B cell (primary cell): ENCODE measurements at regions of chr19 and their contacts with region 1.

Region 1: GRCh38 chr19:10637894-10638293 is 12.5 kb downstream of the SLC44A2 start:
- DNase-seq: no peak
- ATAC-seq: no peak
- H3K4me3 ChIP-seq: no peak overlapping the region
- H3K4me3 Mint-ChIP-seq: no peak overlapping the region
- H3K27ac ChIP-seq: peak overlapping the region in 1 of 2 donors; percentile 9
- H3K27ac Mint-ChIP-seq: peak overlapping the region; percentile 60
- H3K4me1 ChIP-seq: peaks cover 0 to 12% of the 10 kb centered on the region in 2 donors
- H3K4me1 Mint-ChIP-seq: peaks cover 28% of the 10 kb centered on the region
- H3K27me3 ChIP-seq: no peaks in the 10 kb centered on the region
- H3K27me3 Mint-ChIP-seq: no peaks in the 10 kb centered on the region
- CTCF ChIP-seq: no peak

Region 2: DNA sequence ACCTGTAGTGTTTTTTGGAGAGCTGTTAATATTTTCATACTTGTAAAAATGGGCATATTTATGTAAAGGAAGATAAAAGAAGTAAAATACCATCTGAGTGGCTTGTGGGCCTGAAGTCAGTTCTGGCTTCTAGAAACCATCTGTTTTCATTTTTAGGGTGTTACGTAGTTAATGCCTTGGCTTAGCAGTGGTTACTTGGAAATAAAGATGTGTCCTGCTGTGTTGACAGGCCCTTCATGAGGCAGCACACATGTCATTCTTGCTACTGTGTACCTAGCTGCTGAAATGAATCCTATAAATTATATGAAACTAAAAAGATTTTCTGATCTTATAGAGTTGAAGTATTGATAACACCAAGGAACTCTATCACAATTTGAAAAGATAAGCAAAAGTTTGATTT is 32.3 kb after region 1 on chr19:
- CTCF ChIA-PET with region 1: interaction called, 3 read pairs
- POLR2A ChIA-PET with region 1: interaction called, 12 read pairs
- intact Hi-C with region 1: no loop called
- DNase-seq: no peak
- ATAC-seq: no peak
- H3K4me3 ChIP-seq: no peak overlapping the region
- H3K4me3 Mint-ChIP-seq: no peak overlapping the region
- H3K27ac ChIP-seq: no peak overlapping the region
- H3K27ac Mint-ChIP-seq: no peak overlapping the region
- H3K4me1 ChIP-seq: peaks cover 9 to 26% of the 10 kb centered on the region in 2 donors
- H3K4me1 Mint-ChIP-seq: peaks cover 36% of the 10 kb centered on the region
- H3K27me3 ChIP-seq: no peaks in the 10 kb centered on the region
- H3K27me3 Mint-ChIP-seq: no peaks in the 10 kb centered on the region
- CTCF ChIP-seq: no peak